CD14-positive monocyte (primary cell): ENCODE measurements at regions of chr1 and their contacts with region 1.

Region 1: DNA sequence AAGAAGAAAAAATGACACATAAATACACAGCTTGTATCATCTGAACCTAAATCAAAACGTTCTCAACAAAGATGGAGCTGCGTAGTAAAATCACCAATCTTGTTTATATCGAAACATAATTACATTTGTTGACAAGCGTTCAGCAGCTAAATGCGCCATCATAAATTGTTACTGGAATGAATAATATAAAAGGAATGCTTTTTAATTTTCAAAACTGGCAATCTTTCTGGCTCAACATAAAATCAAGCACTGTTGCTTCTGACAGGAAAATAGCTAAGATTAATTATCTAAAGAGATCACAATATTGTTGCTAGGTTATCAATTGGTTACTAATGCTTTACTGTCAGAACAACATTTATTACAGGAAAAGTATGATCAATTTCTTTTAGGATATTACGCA is 181.5 kb downstream of the GPATCH2 start:
- DNase-seq: no peak
- H3K4me3 ChIP-seq: no peak overlapping the region
- H3K4me3 Mint-ChIP-seq: no peak overlapping the region
- H3K27ac ChIP-seq: no peak overlapping the region
- H3K27ac Mint-ChIP-seq: no peak overlapping the region
- H3K4me1 ChIP-seq: no peaks in the 10 kb centered on the region
- H3K4me1 Mint-ChIP-seq: no peaks in the 10 kb centered on the region
- H3K27me3 ChIP-seq: no peaks in the 10 kb centered on the region
- H3K27me3 Mint-ChIP-seq: no peaks in the 10 kb centered on the region
- CTCF ChIP-seq: no peak

Region 2: GRCh38 chr1:217275655-217276398 is 173.5 kb before region 1 on chr1:
- intact Hi-C with region 1: no loop called
- DNase-seq: no peak
- H3K4me3 ChIP-seq: no peak overlapping the region
- H3K4me3 Mint-ChIP-seq: no peak overlapping the region
- H3K27ac ChIP-seq: no peak overlapping the region
- H3K27ac Mint-ChIP-seq: no peak overlapping the region
- H3K4me1 ChIP-seq: no peaks in the 10 kb centered on the region
- H3K4me1 Mint-ChIP-seq: no peaks in the 10 kb centered on the region
- H3K27me3 ChIP-seq: no peaks in the 10 kb centered on the region
- H3K27me3 Mint-ChIP-seq: no peaks in the 10 kb centered on the region
- CTCF ChIP-seq: no peak

Region 3: GRCh38 chr1:217373761-217374701 is 75.3 kb before region 1 on chr1:
- intact Hi-C with region 1: loop called in 1 of 2 experiments (anchors 2 kb)
- DNase-seq: no peak
- H3K4me3 ChIP-seq: no peak overlapping the region
- H3K4me3 Mint-ChIP-seq: no peak overlapping the region
- H3K27ac ChIP-seq: no peak overlapping the region
- H3K27ac Mint-ChIP-seq: no peak overlapping the region
- H3K4me1 ChIP-seq: no peaks in the 10 kb centered on the region
- H3K4me1 Mint-ChIP-seq: no peaks in the 10 kb centered on the region
- H3K27me3 ChIP-seq: no peaks in the 10 kb centered on the region
- H3K27me3 Mint-ChIP-seq: no peaks in the 10 kb centered on the region
- CTCF ChIP-seq: no peak

Region 4: GRCh38 chr1:218785928-218786327 is 1336.6 kb after region 1 on chr1:
- intact Hi-C with region 1: no loop called
- DNase-seq: no peak
- H3K4me3 ChIP-seq: no peak overlapping the region
- H3K4me3 Mint-ChIP-seq: no peak overlapping the region
- H3K27ac ChIP-seq: no peak overlapping the region
- H3K27ac Mint-ChIP-seq: no peak overlapping the region
- H3K4me1 ChIP-seq: no peaks in the 10 kb centered on the region
- H3K4me1 Mint-ChIP-seq: no peaks in the 10 kb centered on the region
- H3K27me3 ChIP-seq: no peaks in the 10 kb centered on the region
- H3K27me3 Mint-ChIP-seq: peaks cover 0 to 2% (median 0%) of the 10 kb centered on the region in 3 donors
- CTCF ChIP-seq: no peak